GM10248 (cell line): ENCODE measurements at regions of chr19 and their contacts with region 1.

Region 1: GRCh38 chr19:12092065-12092867 is 27.7 kb downstream of the ZNF844 start:
- DNase-seq: peak; percentile 91
- CTCF ChIP-seq: no peak

Region 2: GRCh38 chr19:11964858-11965645 is 127.2 kb before region 1 on chr19 and contains the start of gene ZNF763:
- CTCF ChIA-PET with region 1: interaction called, 19 read pairs
- POLR2A ChIA-PET with region 1: no interaction called
- DNase-seq: peak; percentile 92
- CTCF ChIP-seq: no peak

Region 3: GRCh38 chr19:12112701-12113100 is 20.4 kb after region 1 on chr19:
- CTCF ChIA-PET with region 1: interaction called, 11 read pairs
- POLR2A ChIA-PET with region 1: no interaction called
- DNase-seq: no peak
- CTCF ChIP-seq: no peak

Region 4: GRCh38 chr19:12139885-12140547 is 47.8 kb after region 1 on chr19 and contains the start of gene ZNF20:
- CTCF ChIA-PET with region 1: interaction called, 54 read pairs
- POLR2A ChIA-PET with region 1: no interaction called
- DNase-seq: peak; percentile 96
- CTCF ChIP-seq: peak; percentile 5

Region 5: GRCh38 chr19:12162882-12163806 is 70.9 kb after region 1 on chr19 and contains the start of gene ZNF136:
- CTCF ChIA-PET with region 1: interaction called, 11 read pairs
- POLR2A ChIA-PET with region 1: no interaction called
- DNase-seq: peak; percentile 99
- CTCF ChIP-seq: no peak

Region 6: DNA sequence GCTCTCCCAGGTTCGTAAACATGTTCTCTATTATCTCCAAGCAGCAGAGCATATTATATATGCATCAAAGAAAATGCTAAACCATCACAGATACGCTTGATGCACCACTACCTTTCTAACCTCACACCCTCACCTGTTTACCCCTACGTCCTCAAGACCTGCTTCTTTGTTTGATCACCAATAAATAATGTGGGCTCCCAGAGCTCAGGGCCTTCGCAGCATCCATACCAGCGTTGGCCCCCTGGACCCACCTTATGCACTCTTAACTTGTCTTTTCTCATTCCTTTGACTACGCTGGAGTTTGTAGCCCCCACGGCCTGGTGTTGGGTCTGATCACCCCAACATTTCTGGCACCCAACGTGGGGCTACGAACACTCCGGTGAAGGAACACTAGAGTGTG is 358.6 kb after region 1 on chr19:
- CTCF ChIA-PET with region 1: no interaction called
- POLR2A ChIA-PET with region 1: no interaction called
- DNase-seq: no peak
- CTCF ChIP-seq: no peak

Region 7: GRCh38 chr19:12666265-12667048 is 574.2 kb after region 1 on chr19 and contains the starts of genes MAN2B1 and WDR83:
- CTCF ChIA-PET with region 1: interaction called, 13 read pairs
- POLR2A ChIA-PET with region 1: no interaction called
- DNase-seq: peak; percentile 94
- CTCF ChIP-seq: no peak